Activated CD8-positive, alpha-beta T cell treated with anti-CD3 and anti-CD28 coated beads, Interleukin-2, amount 10 ng/mL, durations not matched to agents 7 days and 5 days (primary cell): ENCODE measurements at regions of chr16 and their contacts with region 1.

Region 1: GRCh38 chr16:85610508-85611332 is 2.4 kb upstream of the GSE1 start:
- DNase-seq: peak; percentile 93
- ATAC-seq: peak; percentile 62
- H3K4me3 Mint-ChIP-seq: peak overlapping the region; percentile 69
- H3K27ac Mint-ChIP-seq: peak overlapping the region; percentile 53
- H3K4me1 Mint-ChIP-seq: peaks cover 58% of the 10 kb centered on the region
- H3K27me3 Mint-ChIP-seq: no peaks in the 10 kb centered on the region

Region 2: GRCh38 chr16:85441189-85441889 is 169.4 kb before region 1 on chr16:
- CTCF ChIA-PET with region 1: interaction called, 12 read pairs
- POLR2A ChIA-PET with region 1: no interaction called
- DNase-seq: no peak
- ATAC-seq: no peak
- H3K4me3 Mint-ChIP-seq: no peak overlapping the region
- H3K27ac Mint-ChIP-seq: no peak overlapping the region
- H3K4me1 Mint-ChIP-seq: no peaks in the 10 kb centered on the region
- H3K27me3 Mint-ChIP-seq: no peaks in the 10 kb centered on the region

Region 3: DNA sequence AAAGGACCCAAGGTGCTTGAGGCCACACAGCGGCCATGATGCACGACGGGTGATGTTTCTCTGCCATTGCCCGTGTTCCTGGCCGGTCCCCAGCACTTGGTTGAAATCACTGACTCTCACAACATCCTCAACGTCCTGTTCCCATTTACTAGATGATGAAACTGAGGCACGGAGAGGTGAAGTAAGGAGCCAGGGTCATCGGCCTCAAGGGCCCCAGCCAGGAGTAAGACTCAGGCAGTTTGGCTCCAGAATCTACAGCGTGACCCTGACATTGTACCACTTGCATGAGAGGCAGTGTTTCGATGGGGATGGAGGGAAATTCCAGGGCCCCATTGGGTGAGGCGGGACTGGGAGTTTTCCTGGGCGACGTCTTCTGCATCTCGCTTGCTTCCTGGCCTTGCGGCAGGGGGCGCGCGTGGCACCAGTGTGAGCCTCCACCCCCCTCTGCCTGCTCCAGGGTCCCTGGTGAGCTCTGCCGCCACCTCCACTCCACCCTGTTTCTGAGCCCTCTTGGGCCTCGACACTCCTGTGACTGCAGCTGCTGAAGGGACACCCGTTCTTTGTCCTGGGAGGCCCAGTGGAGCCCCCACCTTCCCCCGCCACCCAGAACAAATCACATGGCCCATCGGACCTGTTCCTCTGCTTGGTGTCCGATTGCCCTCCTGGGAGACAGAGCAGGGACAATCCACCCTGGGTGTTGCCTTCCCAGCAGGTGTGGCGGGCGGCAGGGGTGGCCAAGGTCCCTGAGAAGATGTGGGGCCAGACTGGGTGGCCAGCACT is 130.6 kb before region 1 on chr16:
- CTCF ChIA-PET with region 1: interaction called, 10 read pairs
- POLR2A ChIA-PET with region 1: no interaction called
- DNase-seq: peak; percentile 31
- ATAC-seq: no peak
- H3K4me3 Mint-ChIP-seq: no peak overlapping the region
- H3K27ac Mint-ChIP-seq: no peak overlapping the region
- H3K4me1 Mint-ChIP-seq: no peaks in the 10 kb centered on the region
- H3K27me3 Mint-ChIP-seq: no peaks in the 10 kb centered on the region

Region 4: GRCh38 chr16:85528528-85529387 is 82.0 kb before region 1 on chr16:
- CTCF ChIA-PET with region 1: interaction called, 12 read pairs
- POLR2A ChIA-PET with region 1: no interaction called
- DNase-seq: peak; percentile 32
- ATAC-seq: no peak
- H3K4me3 Mint-ChIP-seq: no peak overlapping the region
- H3K27ac Mint-ChIP-seq: no peak overlapping the region
- H3K4me1 Mint-ChIP-seq: no peaks in the 10 kb centered on the region
- H3K27me3 Mint-ChIP-seq: no peaks in the 10 kb centered on the region

Region 5: DNA sequence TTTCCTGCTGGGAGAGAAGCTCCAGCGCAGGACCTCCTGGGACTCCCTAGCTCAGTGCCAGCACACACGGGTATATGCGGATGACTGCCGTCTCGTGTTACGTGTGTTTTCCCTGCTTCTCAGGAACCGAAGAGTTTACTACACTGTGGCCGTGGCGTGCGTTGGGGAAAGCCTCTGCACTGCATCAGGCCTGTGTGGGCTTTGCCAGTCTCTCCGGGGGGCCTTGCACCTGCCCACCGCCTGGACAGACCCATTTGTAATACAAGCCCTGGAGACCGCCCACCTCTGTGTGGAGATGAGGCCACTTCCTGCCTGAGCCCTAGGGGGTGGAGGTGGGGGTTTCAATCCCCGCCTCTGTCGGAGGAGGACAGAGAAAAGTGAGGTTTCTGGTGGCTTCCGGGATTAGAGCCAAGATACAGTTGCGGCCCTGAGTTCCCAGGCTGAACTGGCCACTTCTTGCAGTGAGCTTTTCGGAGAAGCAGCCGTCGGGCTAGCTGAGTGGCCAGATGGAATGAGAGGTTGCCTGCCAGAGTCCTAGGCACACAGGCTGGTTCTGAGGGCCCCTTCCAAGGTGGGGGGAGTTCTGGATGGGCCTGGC is 41.0 kb before region 1 on chr16:
- CTCF ChIA-PET with region 1: interaction called, 12 read pairs
- POLR2A ChIA-PET with region 1: interaction called, 3 read pairs
- DNase-seq: peak; percentile 80
- ATAC-seq: peak; percentile 62
- H3K4me3 Mint-ChIP-seq: peak overlapping the region; percentile 74
- H3K27ac Mint-ChIP-seq: peak overlapping the region; percentile 81
- H3K4me1 Mint-ChIP-seq: peaks cover 66% of the 10 kb centered on the region
- H3K27me3 Mint-ChIP-seq: no peaks in the 10 kb centered on the region